Activated CD4-positive, alpha-beta T cell treated with anti-CD3 and anti-CD28 coated beads for 36 hours (primary cell): ENCODE measurements at regions of chr7 and their contacts with region 1.

Region 1: DNA sequence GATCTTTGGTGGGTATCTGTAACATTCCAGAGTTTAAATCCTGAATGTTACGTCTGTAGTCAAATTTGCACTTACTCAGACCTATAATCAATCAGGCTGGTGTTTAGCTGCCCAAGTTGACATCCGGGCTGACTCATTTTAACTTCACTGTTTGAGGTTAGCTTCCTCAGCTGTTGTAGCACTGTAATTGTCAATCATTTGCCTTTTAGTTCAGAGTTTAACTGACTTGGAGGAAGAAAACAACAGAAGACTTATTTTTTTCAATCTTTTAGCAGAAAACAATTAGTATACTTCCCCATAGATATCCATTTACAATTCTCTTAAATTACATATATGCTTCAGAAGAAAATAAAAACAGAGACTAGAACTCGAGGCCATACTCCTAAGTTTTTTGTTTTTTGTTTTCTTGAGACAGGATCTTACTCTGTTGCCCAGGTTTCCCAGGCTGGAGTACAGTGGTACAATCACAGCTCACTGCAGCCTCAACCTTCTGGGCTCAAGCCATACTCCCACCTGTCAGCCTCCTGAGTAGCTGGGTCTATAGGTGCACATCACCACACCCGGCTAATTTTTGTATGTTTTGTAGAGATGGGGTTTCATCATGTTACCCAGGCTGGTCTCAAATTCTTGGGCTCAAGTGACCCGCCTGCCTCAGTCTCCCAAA is 38.5 kb upstream of the LRRC17 start:
- DNase-seq: peak; percentile 47
- ATAC-seq: peak; percentile 80
- H3K4me3 Mint-ChIP-seq: no peak overlapping the region
- H3K27ac Mint-ChIP-seq: no peak overlapping the region
- H3K4me1 Mint-ChIP-seq: peaks cover 31% of the 10 kb centered on the region
- H3K27me3 Mint-ChIP-seq: no peaks in the 10 kb centered on the region

Region 2: GRCh38 chr7:102814025-102814471 is 60.2 kb before region 1 on chr7:
- CTCF ChIA-PET with region 1: no interaction called
- POLR2A ChIA-PET with region 1: no interaction called
- intact Hi-C with region 1: loop called in 1 of 2 experiments (anchors 1 kb)
- DNase-seq: no peak
- ATAC-seq: peak; percentile 95
- H3K4me3 Mint-ChIP-seq: no peak overlapping the region
- H3K27ac Mint-ChIP-seq: peak overlapping the region; percentile 31
- H3K4me1 Mint-ChIP-seq: peaks cover 12% of the 10 kb centered on the region
- H3K27me3 Mint-ChIP-seq: no peaks in the 10 kb centered on the region

Region 3: DNA sequence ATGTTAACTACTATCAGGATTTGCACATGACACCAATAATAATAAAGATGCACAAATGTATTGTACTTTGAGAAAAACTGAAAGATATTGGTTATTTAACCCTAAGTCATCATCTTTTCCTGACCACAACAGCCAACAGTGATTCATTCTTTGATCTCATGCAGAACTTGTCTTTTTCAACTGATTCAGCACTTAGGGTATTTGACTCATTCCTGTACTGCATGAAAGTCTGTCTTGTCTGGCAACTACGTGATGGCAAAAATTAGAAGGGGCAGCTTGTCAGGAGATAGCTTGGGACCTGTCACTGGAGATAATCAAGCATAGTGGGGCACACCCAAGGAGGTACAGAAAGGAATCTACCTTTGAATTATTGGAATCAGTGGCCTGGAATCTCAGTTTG is 39.3 kb before region 1 on chr7:
- CTCF ChIA-PET with region 1: interaction called, 3 read pairs
- POLR2A ChIA-PET with region 1: no interaction called
- intact Hi-C with region 1: loop called (anchors 1 to 2 kb)
- DNase-seq: peak; percentile 34
- ATAC-seq: peak; percentile 95
- H3K4me3 Mint-ChIP-seq: no peak overlapping the region
- H3K27ac Mint-ChIP-seq: no peak overlapping the region
- H3K4me1 Mint-ChIP-seq: peaks cover 8% of the 10 kb centered on the region
- H3K27me3 Mint-ChIP-seq: no peaks in the 10 kb centered on the region

Region 4: GRCh38 chr7:103074519-103075336 is 200.4 kb after region 1 on chr7 and contains the starts of genes ARMC10 and FBXL13:
- CTCF ChIA-PET with region 1: no interaction called
- POLR2A ChIA-PET with region 1: no interaction called
- intact Hi-C with region 1: loop called in 1 of 2 experiments (anchors 5 kb)
- DNase-seq: peak; percentile 93
- ATAC-seq: peak; percentile 84
- H3K4me3 Mint-ChIP-seq: peak within 1 kb of the TSS; percentile 91
- H3K27ac Mint-ChIP-seq: peak within 1 kb of the TSS; percentile 93
- H3K4me1 Mint-ChIP-seq: peaks cover 28% of the 10 kb centered on the region
- H3K27me3 Mint-ChIP-seq: no peaks in the 10 kb centered on the region
- total RNA-seq, gene ARMC10: 42.6 to 50.1 TPM
- total RNA-seq, gene FBXL13: 0.32 to 0.83 TPM